OCI-LY7 (cell line): ENCODE measurements at regions of chr12 and their contacts with region 1.

Region 1: GRCh38 chr12:7638760-7639555 is 26.8 kb downstream of the APOBEC1 start:
- DNase-seq: peak; percentile 93
- H3K4me3 ChIP-seq: no peak overlapping the region
- H3K27ac ChIP-seq: peak overlapping the region; percentile 13
- H3K4me1 ChIP-seq: peaks cover 53% of the 10 kb centered on the region
- CTCF ChIP-seq: peak; percentile 88

Region 2: DNA sequence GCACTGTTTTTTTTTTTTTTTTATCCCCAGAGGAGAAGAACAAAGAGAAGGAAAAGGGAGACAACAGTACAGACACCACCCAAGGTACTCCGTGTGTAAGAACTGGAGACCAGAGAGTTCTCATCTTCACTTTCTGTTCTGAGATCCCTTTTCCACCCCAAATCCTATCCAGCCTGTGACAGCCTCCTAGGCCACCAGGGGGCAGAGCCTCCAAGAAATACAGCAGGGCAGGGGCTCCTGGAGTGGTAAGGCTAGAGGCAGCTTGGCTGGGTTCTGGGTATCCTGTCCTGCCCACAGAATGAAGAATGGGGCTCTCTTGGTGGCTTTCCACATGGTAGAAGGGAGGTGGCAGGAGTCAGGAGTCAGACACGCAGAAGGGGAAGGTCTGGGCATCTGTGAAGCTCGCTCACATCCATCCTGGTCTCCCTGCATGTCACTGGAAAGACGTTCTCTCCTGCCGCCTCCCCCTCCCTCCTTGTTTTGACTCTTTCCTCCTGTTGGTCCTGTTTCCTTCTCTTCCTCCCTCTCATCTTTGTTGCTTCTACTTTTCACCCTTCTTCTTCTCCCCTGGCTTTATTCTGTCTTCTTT is 496.8 kb before region 1 on chr12:
- CTCF ChIA-PET with region 1: no interaction called
- POLR2A ChIA-PET with region 1: no interaction called
- intact Hi-C with region 1: loop called (anchors 1 kb)
- DNase-seq: peak; percentile 70
- H3K4me3 ChIP-seq: no peak overlapping the region
- H3K27ac ChIP-seq: no peak overlapping the region
- H3K4me1 ChIP-seq: no peaks in the 10 kb centered on the region
- CTCF ChIP-seq: peak; percentile 86

Region 3: DNA sequence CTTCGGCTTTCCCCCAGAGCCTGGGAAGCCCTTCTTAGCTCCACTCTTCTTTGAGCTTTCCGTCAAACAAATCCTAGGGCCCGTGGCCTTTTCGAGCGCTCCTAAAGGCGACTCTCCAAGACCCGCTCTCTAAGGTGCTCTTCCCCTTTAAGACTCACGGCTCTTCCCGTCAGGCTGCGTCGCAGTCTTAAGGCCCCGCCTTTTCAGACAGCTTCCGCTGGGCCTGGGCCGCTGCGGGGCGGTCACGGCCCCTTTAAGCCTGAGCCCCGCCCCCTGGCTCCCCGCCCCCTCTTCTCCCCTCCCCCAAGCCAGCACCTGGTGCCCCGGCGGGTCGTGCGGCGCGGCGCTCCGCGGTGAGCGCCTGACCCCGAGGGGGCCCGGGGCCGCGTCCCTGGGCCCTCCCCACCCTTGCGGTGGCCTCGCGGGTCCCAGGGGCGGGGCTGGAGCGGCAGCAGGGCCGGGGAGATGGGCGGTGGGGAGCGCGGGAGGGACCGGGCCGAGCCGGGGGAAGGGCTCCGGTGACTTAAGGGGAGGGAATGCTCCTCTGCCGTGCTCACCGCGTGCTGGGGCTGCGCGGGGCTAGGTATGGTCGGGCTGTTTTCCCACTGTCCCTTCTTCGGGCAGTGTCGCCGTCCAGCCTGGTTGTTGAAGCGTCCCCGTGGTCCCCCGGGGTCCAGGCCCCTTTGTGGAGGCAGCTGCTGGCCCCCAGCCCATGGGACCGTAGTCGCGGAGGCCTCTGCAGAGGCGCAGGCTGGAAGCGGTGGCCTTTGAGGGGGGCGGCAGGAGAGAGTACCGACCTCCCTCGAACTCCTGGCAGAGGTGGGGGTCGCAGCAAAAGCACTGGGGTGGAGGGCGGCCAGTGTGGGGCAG is 449.3 kb before region 1 on chr12 and contains the start of gene PEX5:
- CTCF ChIA-PET with region 1: no interaction called
- POLR2A ChIA-PET with region 1: interaction called, 11 read pairs
- intact Hi-C with region 1: loop called (anchors 1 kb)
- DNase-seq: peak; percentile 98
- H3K4me3 ChIP-seq: peak within 1 kb of the TSS; percentile 85
- H3K27ac ChIP-seq: peak within 1 kb of the TSS; percentile 72
- H3K4me1 ChIP-seq: peaks cover 26% of the 10 kb centered on the region
- CTCF ChIP-seq: no peak
- total RNA-seq, gene PEX5: 45.6 and 54.4 TPM in 2 replicates

Region 4: GRCh38 chr12:7219599-7220243 is 419.2 kb before region 1 on chr12:
- CTCF ChIA-PET with region 1: no interaction called
- POLR2A ChIA-PET with region 1: no interaction called
- intact Hi-C with region 1: loop called (anchors 1 kb)
- DNase-seq: peak; percentile 84
- H3K4me3 ChIP-seq: no peak overlapping the region
- H3K27ac ChIP-seq: no peak overlapping the region
- H3K4me1 ChIP-seq: no peaks in the 10 kb centered on the region
- CTCF ChIP-seq: peak; percentile 98

Region 5: GRCh38 chr12:7460375-7461259 is 178.3 kb before region 1 on chr12:
- CTCF ChIA-PET with region 1: no interaction called
- POLR2A ChIA-PET with region 1: no interaction called
- intact Hi-C with region 1: loop called (anchors 1 kb)
- DNase-seq: peak; percentile 54
- H3K4me3 ChIP-seq: no peak overlapping the region
- H3K27ac ChIP-seq: no peak overlapping the region
- H3K4me1 ChIP-seq: no peaks in the 10 kb centered on the region
- CTCF ChIP-seq: peak; percentile 85

Region 6: DNA sequence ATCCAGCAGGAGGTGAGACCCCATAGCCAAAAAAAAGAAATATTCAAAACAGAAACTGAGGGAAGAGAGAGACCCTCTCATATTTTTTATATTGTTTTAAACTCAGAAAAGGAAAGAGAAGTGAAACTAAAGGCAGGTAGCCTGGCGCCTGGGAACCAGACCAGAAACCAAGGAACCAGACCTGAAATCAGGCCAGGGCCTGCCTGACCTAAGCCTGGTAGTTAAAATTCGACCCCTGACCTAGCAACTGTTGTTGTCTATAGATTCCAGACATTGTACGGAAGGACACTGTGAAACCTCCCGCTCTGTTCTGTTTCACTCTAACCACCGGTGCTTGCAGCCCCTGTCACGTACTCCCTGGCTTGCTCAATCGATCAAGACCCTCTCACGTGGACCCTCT is 96.9 kb before region 1 on chr12:
- CTCF ChIA-PET with region 1: no interaction called
- POLR2A ChIA-PET with region 1: no interaction called
- intact Hi-C with region 1: no loop called
- DNase-seq: peak; percentile 16
- H3K4me3 ChIP-seq: no peak overlapping the region
- H3K27ac ChIP-seq: no peak overlapping the region
- H3K4me1 ChIP-seq: peaks cover 17% of the 10 kb centered on the region
- CTCF ChIP-seq: no peak

Region 7: GRCh38 chr12:7583571-7583970 is 55.4 kb before region 1 on chr12:
- CTCF ChIA-PET with region 1: no interaction called
- POLR2A ChIA-PET with region 1: interaction called, 4 read pairs
- intact Hi-C with region 1: loop called (anchors 1 kb)
- DNase-seq: no peak
- H3K4me3 ChIP-seq: no peak overlapping the region
- H3K27ac ChIP-seq: no peak overlapping the region
- H3K4me1 ChIP-seq: no peaks in the 10 kb centered on the region
- CTCF ChIP-seq: no peak

Region 8: DNA sequence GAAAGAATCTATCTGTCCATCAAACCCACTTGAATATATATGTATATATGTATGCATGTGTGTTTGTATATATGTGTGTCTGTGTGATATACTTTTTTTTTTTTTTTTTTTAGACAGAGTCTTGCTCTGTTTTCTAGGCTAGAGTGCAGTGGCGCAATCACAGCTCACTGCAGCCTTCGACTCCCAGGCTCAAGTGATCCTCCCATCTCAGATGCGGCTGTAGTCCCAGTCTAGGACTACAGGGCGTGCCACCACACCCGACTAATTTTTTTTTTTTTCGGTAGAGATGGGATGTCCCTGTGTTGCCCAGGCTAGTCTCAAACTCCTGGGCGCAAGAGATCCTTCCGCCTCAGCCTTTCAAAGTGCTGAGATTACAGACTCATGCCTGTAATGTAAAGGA is 39.8 kb after region 1 on chr12:
- CTCF ChIA-PET with region 1: no interaction called
- POLR2A ChIA-PET with region 1: no interaction called
- intact Hi-C with region 1: no loop called
- DNase-seq: no peak
- H3K4me3 ChIP-seq: no peak overlapping the region
- H3K27ac ChIP-seq: no peak overlapping the region
- H3K4me1 ChIP-seq: peaks cover 8% of the 10 kb centered on the region
- CTCF ChIP-seq: no peak